GM10248 (cell line): ENCODE measurements at regions of chr14 and their contacts with region 1.

Region 1: DNA sequence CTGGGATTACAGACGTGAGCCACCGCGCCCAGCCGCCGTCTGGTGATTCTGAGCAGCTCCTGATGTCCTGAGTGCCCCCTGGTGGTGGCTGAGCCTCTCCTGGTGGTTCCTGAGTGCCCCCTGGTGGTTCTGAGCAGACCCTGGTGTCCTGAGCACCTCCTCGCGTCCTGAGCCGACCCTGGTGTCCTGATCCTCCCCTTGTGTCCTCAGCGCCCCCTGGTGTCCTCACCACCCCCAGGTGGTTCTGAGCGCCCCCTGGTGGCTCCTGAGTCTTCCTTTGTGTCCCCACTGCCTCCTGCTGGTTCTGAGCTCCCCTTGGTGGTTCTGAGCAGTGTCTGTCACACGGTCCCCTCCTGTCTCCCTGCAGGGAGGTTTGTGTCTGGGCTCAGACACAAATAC is 1304.9 kb downstream of the TMEM121 start:
- DNase-seq: peak; percentile 54
- CTCF ChIP-seq: peak; percentile 92

Region 2: GRCh38 chr14:106530423-106531107 is 300.8 kb before region 1 on chr14:
- CTCF ChIA-PET with region 1: interaction called, 11 read pairs
- POLR2A ChIA-PET with region 1: no interaction called
- DNase-seq: peak; percentile 25
- CTCF ChIP-seq: peak; percentile 81

Region 3: DNA sequence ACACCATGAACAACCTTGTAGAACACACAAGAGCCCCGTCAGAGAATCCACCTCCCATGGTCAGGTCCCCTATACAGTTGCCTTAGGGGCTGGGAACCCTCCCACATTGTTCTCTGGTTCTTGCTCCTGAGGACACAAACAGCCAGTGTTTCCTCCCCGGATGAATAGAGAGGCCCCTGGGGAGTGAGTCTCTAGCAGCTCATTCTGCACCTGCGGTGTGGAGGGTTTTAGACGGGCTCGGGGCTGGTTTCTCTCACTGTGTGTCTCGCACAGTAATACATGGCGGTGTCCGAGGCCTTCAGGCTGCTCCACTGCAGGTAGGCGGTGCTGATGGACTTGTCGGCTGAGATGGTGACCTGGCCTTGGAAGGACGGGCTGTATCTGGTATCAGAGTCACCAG is 252.8 kb before region 1 on chr14:
- CTCF ChIA-PET with region 1: no interaction called
- POLR2A ChIA-PET with region 1: no interaction called
- DNase-seq: no peak
- CTCF ChIP-seq: no peak

Region 4: DNA sequence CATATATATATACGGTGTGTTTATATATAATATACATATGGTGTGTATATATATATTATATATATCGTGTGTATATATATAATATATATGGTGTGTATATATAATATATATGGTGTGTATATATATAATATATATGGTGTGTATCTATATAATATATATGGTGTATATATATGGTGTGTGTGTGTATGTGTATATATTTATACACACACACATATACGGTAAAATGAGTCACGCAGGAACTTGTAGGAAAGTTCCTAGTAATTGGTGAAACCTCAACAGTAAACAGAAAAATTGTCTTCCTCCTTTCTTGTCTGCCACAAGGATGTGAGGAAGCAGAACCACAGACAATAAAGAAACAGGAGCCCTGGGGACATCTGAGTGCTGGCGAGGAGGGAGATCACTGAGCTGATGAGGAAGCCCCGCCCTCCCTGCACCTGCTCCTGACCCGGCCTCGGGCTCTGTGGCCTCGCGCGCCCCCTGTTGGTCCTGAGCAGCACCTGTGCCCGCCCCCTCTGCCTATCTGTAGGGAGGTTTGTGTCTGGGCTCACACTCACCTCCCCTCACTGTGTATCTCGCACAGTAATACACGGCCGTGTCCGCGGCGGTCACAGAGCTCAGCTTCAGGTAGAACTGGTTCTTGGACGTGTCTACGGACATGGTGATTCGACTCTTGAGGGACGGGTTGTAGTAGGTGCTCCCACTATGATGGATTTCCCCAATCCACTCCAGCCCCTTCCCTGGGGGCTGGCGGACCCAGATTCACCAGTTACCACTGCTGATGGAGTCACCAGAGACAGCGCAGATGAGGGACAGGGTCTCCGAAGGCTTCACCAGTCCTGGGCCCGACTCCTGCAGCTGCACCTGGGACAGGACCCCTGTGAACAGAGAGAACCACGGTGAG is 225.5 kb before region 1 on chr14:
- CTCF ChIA-PET with region 1: interaction called, 14 read pairs
- POLR2A ChIA-PET with region 1: no interaction called
- DNase-seq: peak; percentile 74
- CTCF ChIP-seq: peak; percentile 90

Region 5: GRCh38 chr14:106691601-106692291 is 139.6 kb before region 1 on chr14:
- CTCF ChIA-PET with region 1: interaction called, 13 read pairs
- POLR2A ChIA-PET with region 1: no interaction called
- DNase-seq: peak; percentile 78
- CTCF ChIP-seq: peak; percentile 100

Region 6: DNA sequence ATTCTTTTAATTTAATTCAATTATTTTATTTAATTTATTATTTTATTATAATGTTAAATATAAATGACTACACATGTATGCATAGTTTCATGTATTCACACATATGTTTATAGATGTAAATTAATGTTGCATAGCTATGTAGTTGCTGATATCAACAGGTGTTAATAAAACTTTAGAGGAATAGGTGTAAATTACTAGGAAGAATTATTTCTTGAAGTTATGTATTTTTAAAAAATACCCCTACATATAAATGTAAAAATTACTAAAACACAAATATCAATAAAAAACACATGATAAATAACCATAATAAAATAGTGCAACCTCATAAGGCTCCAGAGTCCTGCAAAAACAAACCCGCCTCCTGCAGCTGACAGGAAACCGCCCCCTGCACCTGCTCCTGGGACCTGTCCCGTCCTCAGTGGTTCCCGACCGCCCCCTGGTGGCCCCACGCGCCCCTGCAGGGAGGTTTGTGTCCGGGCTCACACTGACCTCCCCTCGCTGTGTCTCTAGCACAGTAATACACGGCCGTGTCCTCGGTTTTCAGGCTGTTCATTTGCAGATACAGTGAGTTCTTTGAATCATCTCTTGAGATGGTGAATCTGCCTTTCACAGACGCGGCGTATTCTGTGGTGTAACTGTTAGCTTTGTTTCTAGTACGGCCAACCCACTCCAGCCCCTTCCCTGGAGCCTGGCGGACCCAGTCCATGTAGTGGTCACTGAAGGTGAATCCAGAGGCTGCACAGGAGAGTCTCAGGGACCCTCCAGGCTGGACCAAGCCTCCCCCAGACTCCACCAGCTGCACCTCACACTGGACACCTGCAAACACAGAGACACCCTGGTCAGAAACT is 40.9 kb before region 1 on chr14:
- CTCF ChIA-PET with region 1: interaction called, 113 read pairs
- POLR2A ChIA-PET with region 1: no interaction called
- DNase-seq: peak; percentile 77
- CTCF ChIP-seq: peak; percentile 83

Region 7: GRCh38 chr14:106844608-106845285 is 13.4 kb after region 1 on chr14:
- CTCF ChIA-PET with region 1: interaction called, 541 read pairs
- POLR2A ChIA-PET with region 1: interaction called, 3 read pairs
- DNase-seq: peak; percentile 77
- CTCF ChIP-seq: no peak